BJ (cell line): ENCODE measurements at regions of chr3 and their contacts with region 1.

Region 1: GRCh38 chr3:99731499-99731898 is 86.2 kb upstream of the CMSS1 start:
- DNase-seq: no peak
- H3K4me3 ChIP-seq: no peak overlapping the region
- H3K27me3 ChIP-seq: no peaks in the 10 kb centered on the region
- CTCF ChIP-seq: no peak

Region 2: GRCh38 chr3:98209244-98209643 is 1522.3 kb before region 1 on chr3:
- CTCF ChIA-PET with region 1: no interaction called
- POLR2A ChIA-PET with region 1: interaction called, 17 read pairs
- DNase-seq: no peak
- H3K4me3 ChIP-seq: no peak overlapping the region
- H3K27me3 ChIP-seq: no peaks in the 10 kb centered on the region
- CTCF ChIP-seq: no peak